ENCODE measurements at regions of chr7 and their contacts with region 1.

Region 1: GRCh38 chr7:101363734-101364374 is 1.2 kb downstream of the COL26A1 start:
- DNase-seq: peak; percentile 98
- H3K4me3 ChIP-seq: peak overlapping the region; percentile 56 to 70
- H3K27ac ChIP-seq: peak overlapping the region in 1 of 2 experiments; percentile 9; a peak in 1 of 4 replicates
- H3K4me1 ChIP-seq: peaks cover 0 to 4% of the 10 kb centered on the region in 2 experiments; a peak in 1 of 4 replicates
- H3K27me3 ChIP-seq: peaks cover 11% of the 10 kb centered on the region
- CTCF ChIP-seq: peak; percentile 98
- EP300 ChIP-seq: no peak
- RAD21 ChIP-seq: peak; percentile 91

Region 2: DNA sequence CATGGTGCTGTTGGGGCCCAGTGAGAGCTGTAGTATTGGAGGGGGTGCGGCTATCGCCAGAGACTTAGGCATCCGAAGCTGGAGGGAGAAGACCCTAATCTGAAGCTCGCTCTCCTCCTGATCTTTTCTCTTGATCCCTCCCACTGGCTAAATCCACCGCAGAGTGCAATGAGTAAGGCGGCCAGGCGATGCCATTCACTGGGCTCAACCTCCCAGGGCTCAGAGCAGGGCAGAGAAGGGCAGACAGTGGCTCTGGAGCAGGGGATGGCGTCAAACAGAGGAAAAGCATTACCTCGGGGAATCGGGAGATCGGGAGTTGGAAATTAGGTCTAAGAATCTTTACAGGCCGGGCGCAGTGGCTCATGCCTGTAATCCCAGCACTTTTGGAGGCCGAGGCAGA is 23.5 kb before region 1 on chr7:
- CTCF ChIA-PET with region 1: interaction called, 22 read pairs
- POLR2A ChIA-PET with region 1: no interaction called
- DNase-seq: no peak
- H3K4me3 ChIP-seq: no peak overlapping the region
- H3K27ac ChIP-seq: no peak overlapping the region
- H3K4me1 ChIP-seq: no peaks in the 10 kb centered on the region
- H3K27me3 ChIP-seq: peaks cover 14% of the 10 kb centered on the region; the same call in 1 of the 2 replicates
- CTCF ChIP-seq: no peak
- EP300 ChIP-seq: no peak
- RAD21 ChIP-seq: no peak

Region 3: GRCh38 chr7:101378751-101379184 is 14.9 kb after region 1 on chr7:
- CTCF ChIA-PET with region 1: interaction called, 36 read pairs
- POLR2A ChIA-PET with region 1: no interaction called
- DNase-seq: peak; percentile 36
- H3K4me3 ChIP-seq: no peak overlapping the region
- H3K27ac ChIP-seq: no peak overlapping the region
- H3K4me1 ChIP-seq: peaks cover 0 to 2% of the 10 kb centered on the region in 2 experiments; a peak in 1 of 4 replicates
- H3K27me3 ChIP-seq: 0 out of 2 replicates have a peak, but pooled peaks cover 5% of the 10 kb centered on the region
- CTCF ChIP-seq: no peak
- EP300 ChIP-seq: no peak
- RAD21 ChIP-seq: no peak

Region 4: DNA sequence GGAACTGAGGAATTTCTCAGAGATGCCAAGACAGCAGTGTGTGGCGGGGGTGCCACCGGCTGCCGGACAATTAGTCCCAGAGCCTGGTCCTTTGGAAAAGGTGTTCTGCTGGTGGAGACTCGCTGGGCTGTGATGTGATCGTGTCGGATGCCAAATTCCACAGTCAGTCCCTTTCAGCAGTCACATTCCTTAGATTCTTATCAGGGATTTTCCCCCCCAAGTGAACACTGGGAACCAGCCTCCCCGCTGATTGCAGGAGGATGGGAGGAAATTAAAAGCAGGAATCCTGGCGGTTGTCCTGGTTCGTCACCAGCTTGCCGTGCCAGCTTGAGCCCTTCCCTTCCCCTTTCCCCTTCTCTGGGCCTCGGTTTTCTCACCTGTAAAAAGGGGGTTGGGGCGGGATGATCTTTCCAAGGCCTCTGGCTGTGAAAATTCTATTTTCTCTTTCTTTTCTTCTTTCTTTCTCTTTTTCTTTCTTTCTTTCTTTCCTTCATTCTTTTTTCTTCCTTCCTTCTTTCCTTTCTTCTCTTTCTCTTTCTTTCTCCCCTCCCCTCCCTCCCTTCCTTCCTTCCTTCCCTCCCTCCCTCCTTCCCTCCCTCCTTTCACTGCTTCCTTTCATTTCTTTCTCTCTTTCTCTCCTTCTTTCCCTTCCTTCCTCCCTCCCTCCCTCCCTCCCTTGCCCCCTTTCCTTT is 38.4 kb after region 1 on chr7:
- CTCF ChIA-PET with region 1: interaction called, 18 read pairs
- POLR2A ChIA-PET with region 1: no interaction called
- DNase-seq: peak; percentile 78
- H3K4me3 ChIP-seq: peak overlapping the region in 1 of 2 experiments; percentile 2; a peak in 2 of 4 replicates
- H3K27ac ChIP-seq: no peak overlapping the region
- H3K4me1 ChIP-seq: peaks cover 5 to 7% of the 10 kb centered on the region in 2 experiments; a peak in 1 of 4 replicates
- H3K27me3 ChIP-seq: peaks cover 14% of the 10 kb centered on the region; the same call in 1 of the 2 replicates
- CTCF ChIP-seq: no peak
- EP300 ChIP-seq: peak in 1 of 2 experiments; percentile 74; a peak in 1 of 4 replicates
- RAD21 ChIP-seq: no peak

Region 5: GRCh38 chr7:101537205-101537604 is 173.4 kb after region 1 on chr7:
- CTCF ChIA-PET with region 1: interaction called, 10 read pairs
- POLR2A ChIA-PET with region 1: no interaction called
- DNase-seq: peak; percentile 83
- H3K4me3 ChIP-seq: no peak overlapping the region
- H3K27ac ChIP-seq: no peak overlapping the region; a peak in 1 of 4 replicates
- H3K4me1 ChIP-seq: peaks cover 0 to 18% of the 10 kb centered on the region in 2 experiments; a peak in 1 of 4 replicates
- H3K27me3 ChIP-seq: no peaks in the 10 kb centered on the region
- CTCF ChIP-seq: no peak
- EP300 ChIP-seq: no peak
- RAD21 ChIP-seq: no peak

Measured in SK-N-SH (cell line).